A549 (cell line): ENCODE measurements at regions of chr1 and their contacts with region 1.

Region 1: GRCh38 chr1:221741711-221742554 is at the start of gene DUSP10:
- DNase-seq: peak; percentile 99
- ATAC-seq: peak; percentile 83 to 95
- H3K4me3 ChIP-seq: peak within 1 kb of the TSS; percentile 73
- H3K27ac ChIP-seq: peak within 1 kb of the TSS; percentile 93 to 97
- H3K4me1 ChIP-seq: peaks cover 9% of the 10 kb centered on the region; the same call in 1 of the 3 replicates
- CTCF ChIP-seq: no peak
- EP300 ChIP-seq: no peak
- POLR2A ChIP-seq: no peak; the same call in none of the 2 replicates
- RAD21 ChIP-seq: peak; percentile 13 to 19; a peak in 1 of 5 replicates
- polyA plus RNA-seq, gene DUSP10: 4.8 and 5.0 TPM in 2 replicates

Region 2: GRCh38 chr1:221718381-221719277 is 23.3 kb before region 1 on chr1:
- CTCF ChIA-PET with region 1: interaction called, 3 read pairs
- POLR2A ChIA-PET with region 1: interaction called, 12 read pairs
- DNase-seq: peak; percentile 23 to 67
- ATAC-seq: peak; percentile 67 to 84
- H3K4me3 ChIP-seq: no peak overlapping the region
- H3K27ac ChIP-seq: peak overlapping the region; percentile 65 to 87
- H3K4me1 ChIP-seq: peaks cover 57% of the 10 kb centered on the region
- CTCF ChIP-seq: no peak
- EP300 ChIP-seq: peak; percentile 79 to 86; a peak in 3 of 5 replicates
- POLR2A ChIP-seq: no peak
- RAD21 ChIP-seq: peak in 1 of 2 experiments; percentile 51; a peak in 3 of 5 replicates

Region 3: DNA sequence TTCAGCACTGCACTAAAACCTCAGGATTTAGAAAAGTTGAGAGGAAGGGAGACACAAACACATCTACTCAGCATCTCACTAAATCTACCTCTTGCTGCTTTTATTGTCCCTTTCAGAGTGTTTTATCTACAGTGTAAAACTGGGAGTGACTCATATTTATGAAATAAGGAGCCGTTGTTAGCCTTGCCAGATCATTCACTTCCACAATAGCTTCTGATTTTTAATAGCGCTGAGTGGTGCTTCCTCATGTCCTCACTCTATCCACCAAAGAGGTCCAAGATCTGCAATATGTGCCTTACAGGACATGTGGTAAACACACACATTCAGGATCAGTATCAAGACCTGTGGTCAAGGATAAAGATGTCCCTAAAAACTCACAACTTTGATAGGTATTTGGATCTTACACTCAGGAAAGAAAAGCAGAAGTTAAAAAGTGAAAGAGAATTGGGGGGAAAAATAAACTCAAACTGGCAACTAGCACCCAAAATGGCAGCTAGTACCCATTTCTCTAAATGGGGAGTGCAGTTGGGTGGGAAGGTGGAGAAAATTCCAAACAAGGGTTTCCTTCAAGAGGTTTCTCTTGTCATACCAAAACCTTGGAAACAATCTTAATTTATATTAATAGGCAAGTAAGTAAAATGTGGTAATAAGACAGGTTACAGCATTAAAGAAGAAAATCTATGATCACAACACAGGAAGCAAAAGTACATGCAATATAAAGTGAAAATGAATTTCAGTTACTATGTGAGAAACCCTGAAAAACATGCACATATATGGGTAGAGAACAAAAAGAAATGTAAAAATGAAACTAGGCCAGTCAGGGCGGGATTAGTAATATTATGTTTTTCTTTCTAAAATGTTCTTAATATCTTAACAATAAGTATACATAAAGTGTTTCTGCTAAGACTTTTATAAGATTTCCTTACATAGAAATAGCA is 15.9 kb before region 1 on chr1:
- CTCF ChIA-PET with region 1: interaction called, 7 read pairs
- POLR2A ChIA-PET with region 1: interaction called, 10 read pairs
- DNase-seq: no peak
- ATAC-seq: no peak
- H3K4me3 ChIP-seq: no peak overlapping the region
- H3K27ac ChIP-seq: peak overlapping the region in 1 of 2 experiments; percentile 43; a peak in 2 of 6 replicates
- H3K4me1 ChIP-seq: peaks cover 17% of the 10 kb centered on the region
- CTCF ChIP-seq: no peak
- EP300 ChIP-seq: no peak
- POLR2A ChIP-seq: no peak
- RAD21 ChIP-seq: no peak